CD4-positive, alpha-beta memory T cell (primary cell): ENCODE measurements at regions of chr9 and their contacts with region 1.

Region 1: DNA sequence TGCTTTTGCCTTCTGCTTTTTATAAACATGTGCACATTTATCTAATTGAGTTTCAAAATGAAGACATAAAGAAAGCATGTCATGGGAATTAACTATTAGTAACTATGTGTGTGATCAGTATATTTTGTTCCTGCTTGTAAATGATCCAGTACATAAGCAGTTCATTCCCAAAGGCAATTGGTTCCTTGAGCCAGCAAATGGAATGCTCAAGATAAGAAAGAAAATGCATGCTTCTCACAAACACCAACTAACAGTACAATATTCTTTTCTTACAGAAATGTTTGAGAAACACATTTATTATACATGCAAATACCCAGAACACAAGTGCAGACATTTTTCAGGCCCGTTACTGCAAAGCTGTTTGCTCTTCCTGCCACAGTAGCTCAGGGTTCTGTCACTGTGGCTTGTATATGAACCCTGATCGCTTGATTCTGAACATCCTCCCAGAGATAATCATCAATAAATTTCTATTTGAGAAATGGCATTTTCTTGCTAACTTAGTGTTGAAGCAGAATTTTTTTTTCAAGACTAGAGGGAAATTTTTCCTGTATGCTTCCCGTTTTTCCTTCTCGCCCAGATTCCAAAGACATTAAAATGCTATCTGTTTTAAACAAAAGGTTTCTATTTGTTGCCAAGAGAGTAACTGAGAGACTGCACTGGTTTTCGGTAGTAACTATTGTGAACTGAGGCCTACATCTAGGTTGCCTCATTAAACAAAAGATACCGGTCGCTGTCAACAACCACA is 1.9 kb downstream of the GNAQ start:
- DNase-seq: peak in 4 of 5 donors; percentile 39 to 55 (median 48)
- H3K4me3 ChIP-seq: peak overlapping the region; percentile 39 to 86
- H3K4me3 Mint-ChIP-seq: peak overlapping the region; percentile 81 to 95 (median 92)
- H3K27ac ChIP-seq: peak overlapping the region; percentile 69
- H3K27ac Mint-ChIP-seq: peak overlapping the region; percentile 72 to 94 (median 82)
- H3K4me1 ChIP-seq: peaks cover 65% of the 10 kb centered on the region
- H3K4me1 Mint-ChIP-seq: peaks cover 45 to 79% (median 59%) of the 10 kb centered on the region in 4 donors
- H3K27me3 ChIP-seq: no peaks in the 10 kb centered on the region
- H3K27me3 Mint-ChIP-seq: no peaks in the 10 kb centered on the region

Region 2: DNA sequence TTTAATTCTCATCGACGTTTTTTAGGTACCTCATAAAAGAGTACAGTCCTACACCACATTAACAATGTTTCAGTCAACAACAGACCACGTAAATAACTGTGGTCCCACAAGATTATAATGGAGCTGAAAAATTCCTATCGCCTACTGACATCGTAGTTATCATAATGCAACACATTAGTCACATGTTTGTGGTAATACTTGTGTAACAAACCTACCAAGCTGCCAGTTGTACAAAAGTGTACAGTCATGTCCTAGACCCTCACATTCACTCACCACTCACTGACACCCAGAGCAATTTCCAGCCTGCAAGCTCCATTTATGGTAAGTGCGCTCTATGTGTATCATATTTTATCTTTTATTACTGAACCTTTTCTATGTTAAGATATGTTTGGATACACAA is 14.9 kb before region 1 on chr9:
- CTCF ChIA-PET with region 1: interaction called, 15 read pairs
- POLR2A ChIA-PET with region 1: interaction called, 5 read pairs
- intact Hi-C with region 1: loop called (anchors 2 kb)
- DNase-seq: no peak
- H3K4me3 ChIP-seq: no peak overlapping the region
- H3K4me3 Mint-ChIP-seq: no peak overlapping the region
- H3K27ac ChIP-seq: no peak overlapping the region
- H3K27ac Mint-ChIP-seq: no peak overlapping the region
- H3K4me1 ChIP-seq: peaks cover 38% of the 10 kb centered on the region
- H3K4me1 Mint-ChIP-seq: peaks cover 45 to 68% (median 55%) of the 10 kb centered on the region in 4 donors
- H3K27me3 ChIP-seq: no peaks in the 10 kb centered on the region
- H3K27me3 Mint-ChIP-seq: no peaks in the 10 kb centered on the region